Caco-2 (cell line): ENCODE measurements at regions of chr1 and their contacts with region 1.

Region 1: GRCh38 chr1:203368624-203369451 is 17.9 kb upstream of the FMOD start:
- DNase-seq: peak; percentile 34 to 52
- H3K4me3 ChIP-seq: no peak overlapping the region
- H3K4me3 Mint-ChIP-seq: no peak overlapping the region
- H3K27ac Mint-ChIP-seq: no peak overlapping the region
- H3K4me1 ChIP-seq: peaks cover 5% of the 10 kb centered on the region; the same call in 1 of the 2 replicates
- H3K4me1 Mint-ChIP-seq: peaks cover 7% of the 10 kb centered on the region
- H3K27me3 ChIP-seq: no peaks in the 10 kb centered on the region
- H3K27me3 Mint-ChIP-seq: no peaks in the 10 kb centered on the region
- CTCF ChIP-seq: peak in 1 of 2 experiments; percentile 18

Region 2: GRCh38 chr1:203340112-203340804 is 28.6 kb before region 1 on chr1:
- CTCF ChIA-PET with region 1: no interaction called
- POLR2A ChIA-PET with region 1: no interaction called
- intact Hi-C with region 1: no loop called
- DNase-seq: peak; percentile 81 to 83
- H3K4me3 ChIP-seq: no peak overlapping the region
- H3K4me3 Mint-ChIP-seq: no peak overlapping the region
- H3K27ac Mint-ChIP-seq: no peak overlapping the region
- H3K4me1 ChIP-seq: peaks cover 5% of the 10 kb centered on the region; the same call in 1 of the 2 replicates
- H3K4me1 Mint-ChIP-seq: peaks cover 6% of the 10 kb centered on the region
- H3K27me3 ChIP-seq: no peaks in the 10 kb centered on the region
- H3K27me3 Mint-ChIP-seq: no peaks in the 10 kb centered on the region
- CTCF ChIP-seq: peak; percentile 90

Region 3: GRCh38 chr1:203440771-203441170 is 71.9 kb after region 1 on chr1:
- CTCF ChIA-PET with region 1: no interaction called
- POLR2A ChIA-PET with region 1: no interaction called
- intact Hi-C with region 1: loop called (anchors 1 kb)
- DNase-seq: peak; percentile 60
- H3K4me3 ChIP-seq: no peak overlapping the region
- H3K4me3 Mint-ChIP-seq: no peak overlapping the region
- H3K27ac Mint-ChIP-seq: no peak overlapping the region
- H3K4me1 ChIP-seq: 0 out of 2 replicates have a peak, but pooled peaks cover 3% of the 10 kb centered on the region
- H3K4me1 Mint-ChIP-seq: peaks cover 7% of the 10 kb centered on the region
- H3K27me3 ChIP-seq: no peaks in the 10 kb centered on the region
- H3K27me3 Mint-ChIP-seq: peaks cover 2% of the 10 kb centered on the region
- CTCF ChIP-seq: peak; percentile 29 to 67